HCT116 (cell line): ENCODE measurements at regions of chr14 and their contacts with region 1.

Region 1: DNA sequence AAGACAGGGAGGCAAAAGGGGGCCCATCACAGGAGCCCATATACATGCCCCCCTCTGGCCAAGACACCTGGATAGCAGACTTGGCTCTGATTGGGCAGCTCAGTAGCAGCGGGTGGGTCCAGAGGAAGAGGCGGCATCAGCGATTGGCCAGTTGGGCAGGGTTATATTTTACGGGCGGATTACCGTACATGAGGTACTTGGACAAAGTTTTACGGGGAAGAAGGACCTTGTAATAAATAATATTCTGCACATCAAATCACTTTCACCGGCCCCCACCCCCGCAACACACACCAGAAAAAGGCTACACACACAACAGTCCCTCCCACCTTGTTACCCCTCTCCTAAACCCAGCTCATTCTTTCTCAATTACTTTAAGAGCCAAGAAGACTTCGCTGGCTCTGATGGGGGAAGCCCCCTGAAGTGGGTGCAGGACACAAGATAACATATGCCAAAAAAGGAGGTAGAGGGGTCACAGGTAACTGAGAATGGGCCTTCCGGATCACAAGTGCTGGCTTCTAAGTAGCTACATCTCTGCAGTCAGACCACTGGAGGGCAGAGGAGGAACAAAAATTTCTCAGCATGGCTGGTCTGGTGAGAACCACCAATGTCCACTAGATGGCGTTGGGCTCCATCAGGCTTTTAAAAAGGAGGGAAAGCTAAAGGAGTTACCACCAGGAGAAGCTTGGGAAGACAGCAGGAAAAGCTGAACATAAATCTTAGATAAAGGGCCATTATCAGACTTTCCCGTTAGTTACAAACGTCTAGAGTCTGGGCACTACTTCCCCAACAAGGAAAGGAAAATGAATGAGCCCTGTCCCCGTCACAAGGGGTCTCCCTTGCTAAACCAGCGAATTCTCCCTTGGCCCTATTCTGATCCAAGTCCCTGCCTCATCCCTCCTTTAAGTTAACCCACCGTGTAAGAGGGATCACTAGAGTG is 11.4 kb upstream of the CDH24 start:
- DNase-seq: peak; percentile 88
- ATAC-seq: peak; percentile 76
- H3K4me3 ChIP-seq: no peak overlapping the region
- H3K27ac ChIP-seq: peak overlapping the region; percentile 54
- H3K4me1 ChIP-seq: peaks cover 29 to 36% of the 10 kb centered on the region in 2 experiments
- H3K27me3 ChIP-seq: no peaks in the 10 kb centered on the region
- CTCF ChIP-seq: peak; percentile 99 to 100 (median 99)
- POLR2A ChIP-seq: no peak
- RAD21 ChIP-seq: peak; percentile 80

Region 2: DNA sequence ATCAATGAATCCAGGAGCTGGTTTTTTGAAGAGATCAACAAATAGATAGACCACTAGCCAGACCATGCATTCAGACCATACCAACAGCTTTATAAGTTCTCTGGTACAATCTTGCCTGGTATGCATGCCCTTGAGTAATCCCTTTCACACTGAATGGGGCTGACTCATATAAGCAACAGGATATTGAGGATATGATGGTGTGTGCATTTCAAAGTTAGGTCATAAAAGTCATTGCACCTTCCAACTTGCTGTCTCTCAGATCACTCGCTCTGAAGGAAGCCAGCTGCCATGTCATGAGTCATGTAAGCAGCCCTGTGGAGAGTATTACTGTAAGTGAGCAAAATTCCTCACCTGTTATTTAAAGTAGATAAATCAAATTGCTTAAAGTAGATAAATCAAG is 379.6 kb before region 1 on chr14:
- CTCF ChIA-PET with region 1: no interaction called
- POLR2A ChIA-PET with region 1: no interaction called
- RAD21 ChIA-PET with region 1: no interaction called
- intact Hi-C with region 1: no loop called
- DNase-seq: peak; percentile 89
- ATAC-seq: peak; percentile 97
- H3K4me3 ChIP-seq: 0 out of 4 replicates have a peak overlapping the region, but pooled peaks of 1 of the 2 experiments have one; percentile 1
- H3K27ac ChIP-seq: no peak overlapping the region
- H3K4me1 ChIP-seq: peaks cover 7 to 32% of the 10 kb centered on the region in 2 experiments
- H3K27me3 ChIP-seq: no peaks in the 10 kb centered on the region
- CTCF ChIP-seq: no peak
- POLR2A ChIP-seq: no peak
- RAD21 ChIP-seq: peak; percentile 22; the same call in 1 of the 2 replicates

Region 3: GRCh38 chr14:22973217-22974032 is 95.3 kb before region 1 on chr14:
- CTCF ChIA-PET with region 1: interaction called, 13 read pairs
- POLR2A ChIA-PET with region 1: no interaction called
- RAD21 ChIA-PET with region 1: no interaction called
- intact Hi-C with region 1: no loop called
- DNase-seq: no peak
- ATAC-seq: peak; percentile 64
- H3K4me3 ChIP-seq: no peak overlapping the region
- H3K27ac ChIP-seq: no peak overlapping the region
- H3K4me1 ChIP-seq: peaks cover 36 to 39% of the 10 kb centered on the region in 2 experiments
- H3K27me3 ChIP-seq: no peaks in the 10 kb centered on the region
- CTCF ChIP-seq: peak in 2 of 3 experiments; percentile 61 to 75; a peak in 4 of 6 replicates
- POLR2A ChIP-seq: no peak
- RAD21 ChIP-seq: no peak

Region 4: DNA sequence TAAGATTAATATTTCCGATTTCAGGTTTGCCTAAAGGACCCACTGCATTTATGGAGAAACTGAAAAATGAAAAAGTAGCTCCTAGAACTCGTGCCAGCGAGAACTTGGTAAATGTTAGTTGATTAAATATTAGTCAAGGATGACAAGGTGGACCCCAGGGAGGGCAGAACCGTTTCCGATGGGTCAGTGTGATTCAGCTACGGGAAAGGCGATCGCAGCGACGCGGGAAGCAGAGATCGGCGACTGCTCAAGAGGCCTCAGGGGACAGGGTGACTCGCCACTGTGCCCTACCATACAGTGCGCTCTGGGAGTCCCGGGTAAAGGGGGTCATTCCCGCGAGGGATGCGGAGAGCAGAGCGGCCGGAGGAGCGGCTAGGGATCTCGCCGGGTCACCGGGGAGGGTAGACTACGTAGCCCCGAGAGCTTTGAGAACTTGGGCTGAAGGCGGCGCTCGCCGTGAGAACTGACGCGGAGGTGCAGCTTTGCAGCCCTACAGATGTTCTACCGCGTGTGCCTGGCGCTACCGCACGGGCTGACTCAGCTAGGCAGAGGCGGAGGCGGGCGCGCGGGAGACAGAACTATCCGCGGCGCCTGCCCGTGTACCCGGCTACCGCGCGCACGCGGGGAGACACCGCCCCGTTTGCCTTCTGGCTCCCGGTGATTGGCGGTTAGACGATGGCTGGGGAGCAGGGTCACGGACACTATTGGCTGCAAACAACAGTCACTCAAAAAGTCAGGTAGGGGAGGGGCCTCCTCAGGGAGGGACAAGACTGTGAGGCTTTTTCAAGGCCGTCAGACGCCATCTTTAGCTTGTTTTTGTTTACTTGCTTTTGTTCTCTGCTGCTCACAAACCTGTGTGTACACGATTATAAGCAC is 62.0 kb before region 1 on chr14:
- CTCF ChIA-PET with region 1: interaction called, 12 read pairs
- POLR2A ChIA-PET with region 1: no interaction called
- RAD21 ChIA-PET with region 1: no interaction called
- intact Hi-C with region 1: no loop called
- DNase-seq: peak; percentile 96
- ATAC-seq: peak; percentile 93
- H3K4me3 ChIP-seq: peak overlapping the region; percentile 64 to 71
- H3K27ac ChIP-seq: peak overlapping the region; percentile 97
- H3K4me1 ChIP-seq: peaks cover 23 to 60% of the 10 kb centered on the region in 2 experiments
- H3K27me3 ChIP-seq: no peaks in the 10 kb centered on the region
- CTCF ChIP-seq: no peak; a peak in 1 of 6 replicates
- POLR2A ChIP-seq: peak; percentile 94
- RAD21 ChIP-seq: no peak

Region 5: GRCh38 chr14:23045419-23046357 is 23.1 kb before region 1 on chr14:
- CTCF ChIA-PET with region 1: no interaction called
- POLR2A ChIA-PET with region 1: no interaction called
- RAD21 ChIA-PET with region 1: no interaction called
- intact Hi-C with region 1: no loop called
- DNase-seq: no peak
- ATAC-seq: no peak
- H3K4me3 ChIP-seq: no peak overlapping the region
- H3K27ac ChIP-seq: no peak overlapping the region
- H3K4me1 ChIP-seq: peaks cover 0 to 5% of the 10 kb centered on the region in 2 experiments; a peak in 1 of 4 replicates
- H3K27me3 ChIP-seq: no peaks in the 10 kb centered on the region
- CTCF ChIP-seq: no peak
- POLR2A ChIP-seq: no peak
- RAD21 ChIP-seq: no peak

Region 6: GRCh38 chr14:23095196-23096108 is 26.7 kb after region 1 on chr14 and contains the start of gene C14orf119:
- CTCF ChIA-PET with region 1: interaction called, 64 read pairs
- POLR2A ChIA-PET with region 1: interaction called, 35 read pairs
- RAD21 ChIA-PET with region 1: interaction called, 3 read pairs
- intact Hi-C with region 1: loop called (anchors 2 kb)
- DNase-seq: peak; percentile 99
- ATAC-seq: peak; percentile 88
- H3K4me3 ChIP-seq: peak within 1 kb of the TSS; percentile 90 to 96
- H3K27ac ChIP-seq: peak within 1 kb of the TSS; percentile 87
- H3K4me1 ChIP-seq: peaks cover 6 to 12% of the 10 kb centered on the region in 2 experiments; a peak in 2 of 4 replicates
- H3K27me3 ChIP-seq: no peaks in the 10 kb centered on the region
- CTCF ChIP-seq: no peak
- POLR2A ChIP-seq: peak; percentile 67
- RAD21 ChIP-seq: no peak
- total RNA-seq, gene C14orf119: 46.8 TPM

Region 7: DNA sequence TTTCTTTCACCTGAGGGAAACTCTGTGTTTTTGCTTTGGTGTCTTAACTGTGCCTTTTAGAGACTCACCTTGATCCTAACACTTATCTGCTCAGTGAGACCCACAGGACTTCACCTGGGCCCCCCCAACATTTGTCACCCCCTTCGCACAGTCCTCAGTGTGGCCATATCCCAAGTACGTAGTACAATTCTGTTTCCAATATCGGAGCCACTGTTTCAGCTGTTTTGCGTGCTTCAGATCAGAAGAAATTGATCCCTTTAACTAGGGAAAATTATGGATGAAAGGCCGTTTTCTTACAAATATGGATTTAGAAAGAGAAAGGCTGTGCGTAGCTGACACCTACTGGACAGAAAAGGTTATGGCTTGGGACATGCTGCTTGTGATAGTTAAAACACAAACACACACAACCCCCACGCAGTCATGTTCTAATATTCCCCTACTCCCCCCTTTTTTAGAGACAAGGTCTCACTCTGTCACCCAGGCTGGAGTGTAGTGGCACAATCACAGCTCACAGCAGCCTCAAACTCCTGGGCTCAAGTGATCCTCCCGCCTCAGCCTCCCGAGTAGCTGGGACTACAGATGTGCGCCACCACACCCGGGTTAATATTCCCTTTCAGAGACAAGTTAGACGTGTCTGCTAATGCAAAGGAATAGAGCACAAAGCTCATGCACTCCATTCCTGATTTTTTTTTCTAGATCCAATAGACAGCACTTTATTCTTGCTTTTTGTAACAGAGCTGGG is 118.3 kb after region 1 on chr14:
- CTCF ChIA-PET with region 1: interaction called, 14 read pairs
- POLR2A ChIA-PET with region 1: no interaction called
- RAD21 ChIA-PET with region 1: no interaction called
- intact Hi-C with region 1: no loop called
- DNase-seq: peak; percentile 64
- ATAC-seq: peak; percentile 68
- H3K4me3 ChIP-seq: no peak overlapping the region
- H3K27ac ChIP-seq: no peak overlapping the region
- H3K4me1 ChIP-seq: peaks cover 6 to 14% of the 10 kb centered on the region in 2 experiments; a peak in 3 of 4 replicates
- H3K27me3 ChIP-seq: no peaks in the 10 kb centered on the region
- CTCF ChIP-seq: peak; percentile 76 to 98 (median 78)
- POLR2A ChIP-seq: no peak
- RAD21 ChIP-seq: peak; percentile 94